PC-3 (cell line): ENCODE measurements at regions of chr13 and their contacts with region 1.

Region 1: GRCh38 chr13:85283408-85283807 is 515.8 kb downstream of the SLITRK6 start:
- DNase-seq: no peak
- ATAC-seq: no peak
- H3K4me3 ChIP-seq: no peak overlapping the region
- H3K27ac ChIP-seq: no peak overlapping the region
- H3K4me1 ChIP-seq: no peaks in the 10 kb centered on the region
- H3K27me3 ChIP-seq: no peaks in the 10 kb centered on the region
- CTCF ChIP-seq: no peak

Region 2: GRCh38 chr13:85261757-85262346 is 21.6 kb before region 1 on chr13:
- CTCF ChIA-PET with region 1: no interaction called
- POLR2A ChIA-PET with region 1: interaction called, 28 read pairs
- intact Hi-C with region 1: no loop called
- DNase-seq: peak; percentile 45
- ATAC-seq: 0 out of 2 replicates have a peak, but pooled peaks have one; percentile 24
- H3K4me3 ChIP-seq: no peak overlapping the region
- H3K27ac ChIP-seq: no peak overlapping the region
- H3K4me1 ChIP-seq: peaks cover 8% of the 10 kb centered on the region; the same call in 1 of the 2 replicates
- H3K27me3 ChIP-seq: no peaks in the 10 kb centered on the region
- CTCF ChIP-seq: peak; percentile 67